CD4-positive, alpha-beta T cell (primary cell): ENCODE measurements at regions of chr2 and their contacts with region 1.

Region 1: GRCh38 chr2:86562922-86563649 is at the start of gene CHMP3:
- DNase-seq: peak; percentile 91 to 99 (median 95)
- ATAC-seq: peak; percentile 90
- H3K4me3 ChIP-seq: peak within 1 kb of the TSS; percentile 99
- H3K4me3 Mint-ChIP-seq: peak within 1 kb of the TSS; percentile 98
- H3K27ac ChIP-seq: peak within 1 kb of the TSS; percentile 99 to 100
- H3K27ac Mint-ChIP-seq: peak within 1 kb of the TSS; percentile 98
- H3K4me1 ChIP-seq: peaks cover 28% of the 10 kb centered on the region
- H3K4me1 Mint-ChIP-seq: peaks cover 39% of the 10 kb centered on the region
- H3K27me3 ChIP-seq: no peaks in the 10 kb centered on the region
- H3K27me3 Mint-ChIP-seq: peaks cover 3% of the 10 kb centered on the region
- CTCF ChIP-seq: no peak
- total RNA-seq, gene CHMP3: 61.7 to 65.3 TPM

Region 2: DNA sequence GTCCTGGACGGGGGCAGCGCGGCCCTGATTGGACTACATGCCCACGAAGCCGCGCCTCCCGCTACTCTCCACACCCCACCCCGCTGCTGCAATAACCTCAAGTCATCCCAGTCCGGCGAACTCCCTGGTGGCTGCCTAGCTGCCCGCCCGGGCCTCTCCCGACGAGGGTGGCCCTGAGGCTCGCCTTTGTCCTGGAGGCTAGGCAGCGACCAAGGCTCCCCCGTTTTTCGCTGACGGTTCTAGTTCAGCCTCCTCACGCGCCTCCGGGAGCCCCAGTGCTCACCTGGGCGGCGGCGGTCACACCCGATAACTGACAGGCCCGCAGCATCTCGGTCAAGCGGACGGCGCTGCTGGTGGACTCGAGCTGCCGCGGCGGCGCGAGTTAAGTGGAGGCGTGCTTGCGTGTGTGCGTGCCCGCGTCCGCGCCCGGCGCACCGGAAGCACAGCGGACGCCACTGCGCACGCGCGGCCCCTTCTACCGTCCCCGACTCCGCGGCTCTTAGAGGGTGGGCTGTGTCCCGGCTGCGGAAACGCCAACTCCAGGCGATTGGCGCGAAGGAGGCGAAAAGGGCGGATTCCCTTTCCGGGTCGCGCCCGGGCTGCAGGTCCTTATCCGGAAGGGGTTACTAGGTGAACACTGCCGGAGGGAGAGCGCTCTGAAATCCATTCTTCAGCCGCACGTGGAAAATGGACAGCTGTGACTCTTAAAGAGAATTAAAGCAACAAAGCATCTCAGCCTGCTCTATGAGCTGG is 367.9 kb before region 1 on chr2 and contains the start of gene IMMT:
- CTCF ChIA-PET with region 1: no interaction called
- POLR2A ChIA-PET with region 1: no interaction called
- intact Hi-C with region 1: loop called in 1 of 2 experiments (anchors 10 kb)
- DNase-seq: peak; percentile 84 to 97 (median 90)
- ATAC-seq: peak; percentile 89
- H3K4me3 ChIP-seq: peak within 1 kb of the TSS; percentile 87
- H3K4me3 Mint-ChIP-seq: peak within 1 kb of the TSS; percentile 89
- H3K27ac ChIP-seq: peak within 1 kb of the TSS; percentile 96 to 98
- H3K27ac Mint-ChIP-seq: peak within 1 kb of the TSS; percentile 85
- H3K4me1 ChIP-seq: peaks cover 45% of the 10 kb centered on the region
- H3K4me1 Mint-ChIP-seq: peaks cover 71% of the 10 kb centered on the region
- H3K27me3 ChIP-seq: no peaks in the 10 kb centered on the region
- H3K27me3 Mint-ChIP-seq: no peaks in the 10 kb centered on the region
- CTCF ChIP-seq: no peak
- total RNA-seq, gene IMMT: 39.5 to 40.8 TPM

Region 3: GRCh38 chr2:86446060-86446459 is 117.0 kb before region 1 on chr2:
- CTCF ChIA-PET with region 1: no interaction called
- POLR2A ChIA-PET with region 1: interaction called, 42 read pairs
- intact Hi-C with region 1: loop called (anchors 5 kb)
- DNase-seq: no peak
- ATAC-seq: no peak
- H3K4me3 ChIP-seq: no peak overlapping the region
- H3K4me3 Mint-ChIP-seq: no peak overlapping the region
- H3K27ac ChIP-seq: no peak overlapping the region
- H3K27ac Mint-ChIP-seq: peak overlapping the region; percentile 40
- H3K4me1 ChIP-seq: peaks cover 40% of the 10 kb centered on the region
- H3K4me1 Mint-ChIP-seq: peaks cover 83% of the 10 kb centered on the region
- H3K27me3 ChIP-seq: no peaks in the 10 kb centered on the region
- H3K27me3 Mint-ChIP-seq: peaks cover 2% of the 10 kb centered on the region
- CTCF ChIP-seq: no peak

Region 4: DNA sequence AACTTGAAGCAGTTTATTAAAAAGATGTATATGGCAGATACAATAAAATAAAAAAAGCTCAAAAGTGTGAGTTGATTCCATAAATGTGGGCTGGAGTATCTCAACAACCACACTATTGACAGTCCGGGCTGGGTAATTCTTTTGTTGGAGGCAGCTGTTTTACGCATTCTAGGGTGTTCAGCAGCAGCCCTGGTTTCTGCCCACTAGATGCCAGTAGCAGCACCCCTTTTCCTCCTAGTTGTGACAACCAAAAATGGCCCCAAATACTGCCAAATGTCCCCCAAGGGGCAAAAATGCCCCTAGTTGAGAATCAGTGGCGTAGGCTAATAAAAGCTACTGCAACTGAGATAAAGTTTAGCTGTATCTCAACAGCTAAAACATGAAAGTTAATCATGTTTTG is 44.6 kb before region 1 on chr2:
- CTCF ChIA-PET with region 1: no interaction called
- POLR2A ChIA-PET with region 1: interaction called, 5 read pairs
- intact Hi-C with region 1: loop called in 1 of 2 experiments (anchors 10 kb)
- DNase-seq: peak; percentile 14 to 70 (median 32)
- ATAC-seq: peak; percentile 66
- H3K4me3 ChIP-seq: no peak overlapping the region
- H3K4me3 Mint-ChIP-seq: no peak overlapping the region
- H3K27ac ChIP-seq: no peak overlapping the region
- H3K27ac Mint-ChIP-seq: no peak overlapping the region
- H3K4me1 ChIP-seq: no peaks in the 10 kb centered on the region
- H3K4me1 Mint-ChIP-seq: peaks cover 16% of the 10 kb centered on the region
- H3K27me3 ChIP-seq: no peaks in the 10 kb centered on the region
- H3K27me3 Mint-ChIP-seq: no peaks in the 10 kb centered on the region
- CTCF ChIP-seq: peak; percentile 70

Region 5: GRCh38 chr2:86584151-86584913 is 21.2 kb after region 1 on chr2:
- CTCF ChIA-PET with region 1: interaction called, 5 read pairs
- POLR2A ChIA-PET with region 1: interaction called, 15 read pairs
- intact Hi-C with region 1: no loop called
- DNase-seq: peak in 4 of 14 experiments; percentile 43 to 61 (median 48)
- ATAC-seq: peak; percentile 91
- H3K4me3 ChIP-seq: no peak overlapping the region
- H3K4me3 Mint-ChIP-seq: peak overlapping the region; percentile 32
- H3K27ac ChIP-seq: peak overlapping the region; percentile 1 to 61
- H3K27ac Mint-ChIP-seq: peak overlapping the region; percentile 85
- H3K4me1 ChIP-seq: peaks cover 8% of the 10 kb centered on the region
- H3K4me1 Mint-ChIP-seq: peaks cover 28% of the 10 kb centered on the region
- H3K27me3 ChIP-seq: no peaks in the 10 kb centered on the region
- H3K27me3 Mint-ChIP-seq: no peaks in the 10 kb centered on the region
- CTCF ChIP-seq: no peak

Region 6: DNA sequence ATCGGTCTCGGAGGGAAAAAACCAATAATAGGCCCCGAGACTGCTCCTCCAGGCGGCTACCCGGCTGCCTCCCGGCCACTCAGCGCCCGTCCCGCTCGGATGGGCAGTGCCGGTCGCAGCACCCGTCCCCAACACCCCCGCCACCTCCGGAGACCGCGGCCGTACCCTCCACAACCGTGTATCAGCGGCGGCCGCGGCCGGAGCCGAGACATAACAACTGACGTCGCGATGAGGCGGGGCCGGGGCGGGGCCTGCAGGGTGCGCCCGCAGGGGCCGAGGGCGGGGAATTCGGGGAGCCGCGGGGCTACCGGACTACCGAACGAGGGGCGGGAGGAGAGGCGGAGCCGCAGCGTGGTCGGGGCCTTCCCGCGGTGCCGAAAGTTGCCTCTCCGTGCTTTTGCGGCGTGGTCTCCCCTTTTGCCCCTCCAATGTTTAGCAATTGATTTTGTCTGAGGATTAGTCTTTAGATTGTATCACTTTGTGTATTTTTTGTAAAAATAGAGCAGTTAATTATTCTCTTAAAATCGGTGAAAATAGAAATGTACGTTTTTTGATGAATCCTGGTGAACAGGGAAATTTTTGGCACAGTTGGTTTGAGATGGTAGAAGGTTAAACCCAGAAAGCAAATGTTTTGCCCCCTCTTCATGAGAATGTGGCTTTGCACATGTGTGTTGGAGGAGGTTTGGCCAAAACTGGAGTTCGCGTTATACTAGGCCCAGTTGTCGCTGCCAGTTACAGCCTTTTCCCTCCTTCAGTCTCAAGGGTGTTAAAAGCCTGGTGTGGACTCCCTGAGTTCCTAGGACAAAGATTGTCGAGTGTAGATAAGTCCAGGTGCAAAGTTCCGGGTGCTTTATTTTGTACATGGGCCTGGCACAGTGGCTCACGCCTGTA is 60.8 kb after region 1 on chr2 and contains the start of gene RNF103:
- CTCF ChIA-PET with region 1: no interaction called
- POLR2A ChIA-PET with region 1: interaction called, 39 read pairs
- intact Hi-C with region 1: loop called (anchors 2 kb)
- DNase-seq: peak; percentile 85 to 96 (median 94)
- ATAC-seq: peak; percentile 88
- H3K4me3 ChIP-seq: peak within 1 kb of the TSS; percentile 61
- H3K4me3 Mint-ChIP-seq: peak within 1 kb of the TSS; percentile 94
- H3K27ac ChIP-seq: peak within 1 kb of the TSS; percentile 91 to 93
- H3K27ac Mint-ChIP-seq: peak within 1 kb of the TSS; percentile 92
- H3K4me1 ChIP-seq: peaks cover 10% of the 10 kb centered on the region
- H3K4me1 Mint-ChIP-seq: peaks cover 40% of the 10 kb centered on the region
- H3K27me3 ChIP-seq: no peaks in the 10 kb centered on the region
- H3K27me3 Mint-ChIP-seq: peaks cover 3% of the 10 kb centered on the region
- CTCF ChIP-seq: no peak
- total RNA-seq, gene RNF103: 124 to 130 TPM